ENCODE measurements at regions of chr4 and their contacts with region 1.

Region 1: GRCh38 chr4:8176547-8177399 is 18.2 kb upstream of the ABLIM2 start:
- DNase-seq: peak; percentile 15
- H3K4me3 Mint-ChIP-seq: no peak overlapping the region
- H3K27ac Mint-ChIP-seq: no peak overlapping the region
- H3K4me1 Mint-ChIP-seq: no peaks in the 10 kb centered on the region
- H3K27me3 Mint-ChIP-seq: no peaks in the 10 kb centered on the region

Region 2: DNA sequence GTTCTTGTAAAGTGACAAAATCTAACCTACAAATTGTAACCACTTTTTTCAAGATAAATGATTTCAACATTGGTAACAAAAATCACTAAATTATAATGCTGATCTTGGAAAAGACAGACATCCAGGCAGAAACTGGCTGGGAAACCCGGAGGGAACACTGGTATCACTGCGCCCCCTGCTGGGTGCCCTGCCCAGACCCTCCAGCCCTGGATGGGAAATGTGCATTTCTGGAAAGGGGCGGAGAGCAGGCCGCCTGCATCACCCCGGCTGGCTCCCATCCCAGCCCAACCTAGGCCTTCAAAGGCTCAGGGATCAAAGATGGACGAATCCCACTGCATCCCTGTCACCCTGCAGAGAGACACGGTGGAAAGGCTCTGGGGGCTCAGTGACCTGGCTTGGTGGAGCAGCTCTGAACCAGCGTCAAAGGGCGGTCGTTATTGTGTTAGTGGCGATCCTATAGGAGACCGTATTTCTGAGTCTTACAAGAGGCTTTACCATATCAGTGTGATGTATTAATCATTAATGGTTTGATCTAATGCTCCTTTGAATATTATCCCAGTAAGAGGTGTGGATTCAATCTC is 226.5 kb after region 1 on chr4:
- intact Hi-C with region 1: loop called (anchors 2 kb)
- DNase-seq: no peak
- H3K4me3 Mint-ChIP-seq: no peak overlapping the region
- H3K27ac Mint-ChIP-seq: no peak overlapping the region
- H3K4me1 Mint-ChIP-seq: no peaks in the 10 kb centered on the region
- H3K27me3 Mint-ChIP-seq: no peaks in the 10 kb centered on the region

Measured in activated T-helper 2 cell treated with anti-CD3 and anti-CD28 coated beads, Interferon-gamma antibody, Interleukin-2, Interleukin-4, amounts not matched to agents 10 μg/mL and 5 μg/mL and 100 μg/mL, durations not matched to agents 14 hours and 24 hours and 36 hours (primary cell).